SK-N-SH (cell line): ENCODE measurements at regions of chr19 and their contacts with region 1.

Region 1: GRCh38 chr19:1837625-1838105 is 10.6 kb downstream of the REXO1 start:
- DNase-seq: peak; percentile 95
- H3K4me3 ChIP-seq: no peak overlapping the region; a peak in 1 of 4 replicates
- H3K27ac ChIP-seq: no peak overlapping the region; a peak in 1 of 4 replicates
- H3K4me1 ChIP-seq: peaks cover 0 to 12% of the 10 kb centered on the region in 2 experiments; a peak in 1 of 4 replicates
- H3K27me3 ChIP-seq: no peaks in the 10 kb centered on the region
- CTCF ChIP-seq: peak; percentile 94
- EP300 ChIP-seq: no peak
- RAD21 ChIP-seq: peak; percentile 50

Region 2: GRCh38 chr19:1819341-1820275 is 18.1 kb before region 1 on chr19:
- CTCF ChIA-PET with region 1: interaction called, 188 read pairs
- POLR2A ChIA-PET with region 1: no interaction called
- DNase-seq: no peak
- H3K4me3 ChIP-seq: no peak overlapping the region
- H3K27ac ChIP-seq: no peak overlapping the region
- H3K4me1 ChIP-seq: no peaks in the 10 kb centered on the region
- H3K27me3 ChIP-seq: no peaks in the 10 kb centered on the region
- CTCF ChIP-seq: no peak
- EP300 ChIP-seq: no peak
- RAD21 ChIP-seq: no peak

Region 3: DNA sequence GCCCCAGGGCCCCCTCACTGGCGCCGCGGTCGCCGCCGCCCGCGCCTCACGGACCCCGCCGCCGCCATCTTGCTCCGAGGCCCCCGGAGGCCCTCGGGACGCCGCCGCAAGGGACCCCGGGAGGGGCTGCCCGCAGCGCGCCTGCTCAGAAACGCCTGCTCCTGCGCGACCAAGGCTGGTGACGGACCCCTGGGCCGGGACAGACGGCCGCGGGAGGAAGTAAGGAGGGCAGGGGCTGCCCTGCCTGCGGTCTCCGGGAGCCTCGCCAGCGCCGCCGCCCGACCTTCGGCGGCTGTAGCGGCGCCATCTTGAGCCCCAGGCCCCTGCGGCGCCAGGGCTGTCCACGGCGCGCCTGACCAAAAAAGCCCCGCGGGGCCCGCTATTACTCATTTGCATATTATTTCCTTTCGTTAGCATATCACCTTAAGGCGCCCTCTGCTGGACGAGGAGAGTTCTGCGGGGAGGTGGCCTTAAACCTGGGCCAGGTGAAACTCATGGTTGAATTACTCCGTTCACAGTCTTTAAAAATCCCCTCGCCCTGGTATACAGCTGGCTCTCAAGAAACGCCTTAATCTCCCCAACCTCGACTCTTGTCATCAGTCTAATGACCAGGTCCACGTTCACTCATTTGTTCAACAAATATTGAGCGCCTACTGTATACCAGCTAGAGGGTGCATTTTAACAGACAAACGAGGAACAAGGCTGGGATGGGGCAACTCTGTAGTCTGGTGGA is 10.9 kb after region 1 on chr19 and contains the start of gene REXO1:
- CTCF ChIA-PET with region 1: interaction called, 42 read pairs
- POLR2A ChIA-PET with region 1: no interaction called
- DNase-seq: peak; percentile 97
- H3K4me3 ChIP-seq: peak within 1 kb of the TSS; percentile 84 to 94
- H3K27ac ChIP-seq: peak within 1 kb of the TSS; percentile 96 to 99
- H3K4me1 ChIP-seq: peaks cover 7 to 18% of the 10 kb centered on the region in 2 experiments; a peak in 1 of 4 replicates
- H3K27me3 ChIP-seq: no peaks in the 10 kb centered on the region
- CTCF ChIP-seq: peak; percentile 98
- EP300 ChIP-seq: peak in 1 of 2 experiments; percentile 27; a peak in 1 of 4 replicates
- RAD21 ChIP-seq: peak; percentile 39
- polyA plus RNA-seq, gene REXO1: 9.0 and 18.8 TPM in 2 replicates

Region 4: DNA sequence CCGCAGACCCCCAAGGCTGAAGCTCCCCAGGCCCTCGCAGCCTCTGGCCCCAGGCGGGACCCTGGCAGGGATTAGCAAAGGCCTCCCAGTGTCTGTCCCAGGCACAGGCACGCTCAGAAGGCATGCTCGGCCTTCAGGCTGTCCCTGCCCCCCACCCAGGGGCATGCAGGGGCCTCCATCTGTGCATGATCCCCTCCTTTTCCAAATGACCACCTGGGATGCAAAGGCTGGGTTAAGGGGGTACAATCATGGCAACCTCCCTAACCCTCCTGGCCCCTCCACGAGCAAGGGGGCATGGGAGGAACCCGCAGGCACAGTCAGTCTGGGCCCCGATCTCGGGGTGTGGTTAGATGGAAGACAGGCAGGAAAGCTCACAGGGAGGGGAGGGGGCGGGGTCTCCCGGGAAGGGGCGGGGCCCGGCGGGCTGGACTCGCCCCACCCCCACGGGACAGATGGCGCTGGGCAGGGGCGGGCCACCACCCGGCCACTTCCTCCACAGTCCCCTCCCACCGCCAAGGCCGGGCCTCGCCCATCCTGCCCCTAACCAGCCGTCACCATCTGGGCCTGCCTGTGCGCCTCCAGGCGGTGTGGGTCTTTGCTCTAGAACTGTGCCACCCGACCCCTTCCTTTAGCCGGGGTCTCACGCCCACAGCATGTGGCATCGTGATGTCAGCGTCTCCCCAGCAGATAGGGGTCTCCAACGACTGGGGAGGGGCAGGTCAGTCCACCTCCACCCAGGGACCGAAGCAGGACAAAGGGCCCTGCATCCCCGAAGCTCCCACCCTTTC is 17.6 kb after region 1 on chr19:
- CTCF ChIA-PET with region 1: interaction called, 15 read pairs
- POLR2A ChIA-PET with region 1: no interaction called
- DNase-seq: peak; percentile 99
- H3K4me3 ChIP-seq: peak overlapping the region in 1 of 2 experiments; percentile 27; a peak in 2 of 4 replicates
- H3K27ac ChIP-seq: peak overlapping the region; percentile 46 to 87
- H3K4me1 ChIP-seq: peaks cover 25 to 49% of the 10 kb centered on the region in 2 experiments; a peak in 3 of 4 replicates
- H3K27me3 ChIP-seq: no peaks in the 10 kb centered on the region
- CTCF ChIP-seq: no peak
- EP300 ChIP-seq: no peak
- RAD21 ChIP-seq: no peak

Region 5: DNA sequence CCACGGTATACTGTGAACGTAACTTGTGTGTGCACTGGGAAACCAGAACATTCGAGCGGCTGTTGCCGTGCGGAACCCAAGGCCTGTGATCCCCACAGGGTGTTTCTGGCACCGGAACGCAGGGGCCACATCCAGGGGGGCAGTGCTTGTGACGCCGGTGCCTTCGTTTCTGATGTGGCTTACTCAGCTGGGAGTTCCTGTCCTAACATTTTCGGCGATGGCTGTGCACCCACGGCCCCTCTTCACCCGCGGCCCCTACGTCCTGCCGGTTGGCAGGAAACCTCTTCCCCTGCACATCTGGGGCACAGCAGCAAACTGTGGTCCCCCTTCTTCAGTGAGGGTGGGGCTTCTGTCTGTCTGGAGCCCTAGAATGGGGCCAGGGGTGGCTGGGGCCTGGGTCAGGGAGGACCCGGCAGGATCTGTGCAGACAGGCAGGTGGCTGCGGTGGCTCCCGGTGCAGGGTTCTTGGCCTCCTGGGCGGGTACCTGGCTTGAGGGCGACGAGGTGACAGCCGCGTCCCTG is 129.5 kb after region 1 on chr19:
- CTCF ChIA-PET with region 1: no interaction called
- POLR2A ChIA-PET with region 1: no interaction called
- DNase-seq: no peak
- H3K4me3 ChIP-seq: no peak overlapping the region
- H3K27ac ChIP-seq: no peak overlapping the region
- H3K4me1 ChIP-seq: no peaks in the 10 kb centered on the region; a peak in 1 of 4 replicates
- H3K27me3 ChIP-seq: no peaks in the 10 kb centered on the region
- CTCF ChIP-seq: no peak
- EP300 ChIP-seq: no peak
- RAD21 ChIP-seq: no peak